Sigmoid colon (tissue), 7 donors: ENCODE measurements at regions of chr19 and their contacts with region 1.

Region 1: GRCh38 chr19:52853880-52854279 is 3.5 kb downstream of the ZNF468 start:
- DNase-seq: no peak
- H3K4me3 ChIP-seq: no peak overlapping the region
- H3K27ac ChIP-seq: no peak overlapping the region
- H3K4me1 ChIP-seq: peaks cover 0 to 14% (median 3%) of the 10 kb centered on the region in 4 donors
- H3K27me3 ChIP-seq: no peaks in the 10 kb centered on the region
- CTCF ChIP-seq: no peak
- EP300 ChIP-seq: no peak
- POLR2A ChIP-seq: no peak

Region 2: GRCh38 chr19:52613299-52613906 is 240.5 kb before region 1 on chr19:
- intact Hi-C with region 1: no loop called
- DNase-seq: no peak
- H3K4me3 ChIP-seq: no peak overlapping the region
- H3K27ac ChIP-seq: no peak overlapping the region
- H3K4me1 ChIP-seq: no peaks in the 10 kb centered on the region
- H3K27me3 ChIP-seq: no peaks in the 10 kb centered on the region
- CTCF ChIP-seq: no peak
- EP300 ChIP-seq: no peak
- POLR2A ChIP-seq: no peak

Region 3: DNA sequence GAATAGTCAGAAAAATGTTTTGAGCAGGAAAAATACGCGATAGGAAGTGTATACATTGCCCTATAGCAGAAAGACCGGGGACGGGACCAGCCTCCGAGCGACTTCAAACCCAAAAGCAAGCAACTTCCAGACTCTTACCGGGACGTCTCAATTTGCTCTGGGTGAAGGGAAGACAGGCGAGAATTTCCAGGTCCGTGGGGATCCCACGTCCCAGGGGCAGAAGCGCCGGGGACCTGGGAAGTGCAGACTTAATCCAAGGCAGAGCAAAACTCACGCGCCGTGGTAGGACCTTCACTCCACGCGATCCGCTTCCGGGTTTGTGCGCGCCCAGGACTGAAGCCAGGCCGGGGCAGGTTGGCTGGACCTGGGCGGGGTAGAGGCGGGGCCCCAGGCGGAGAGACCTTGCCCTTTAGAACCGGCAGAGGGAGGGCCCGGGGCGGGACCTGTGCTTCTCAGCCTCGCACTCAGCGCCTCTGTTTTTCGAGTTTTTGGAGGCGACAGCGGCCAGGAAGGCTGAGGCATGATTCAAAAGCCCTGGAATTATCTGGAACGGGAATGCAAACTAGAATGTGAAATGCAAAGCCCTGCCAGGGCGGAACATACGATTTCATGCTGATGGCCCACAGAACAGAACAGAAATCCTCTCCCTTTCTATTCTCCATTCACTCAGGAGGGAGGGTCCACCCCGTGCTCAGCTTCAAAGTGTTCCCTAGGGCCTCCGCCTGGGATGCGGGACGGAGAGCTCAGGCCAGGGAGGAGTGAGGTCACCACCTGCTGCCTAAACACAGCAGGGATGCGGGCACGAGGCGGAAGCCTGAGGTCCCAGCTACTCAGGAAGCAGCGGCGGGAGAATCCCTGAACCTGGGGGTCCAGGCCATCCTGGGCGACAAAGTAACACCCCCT is 67.2 kb before region 1 on chr19 and contains the start of gene ZNF600:
- intact Hi-C with region 1: loop called (anchors 5 kb)
- DNase-seq: peak; percentile 96
- H3K4me3 ChIP-seq: peak within 1 kb of the TSS; percentile 42 to 68 (median 66)
- H3K27ac ChIP-seq: peak within 1 kb of the TSS; percentile 73 to 86 (median 82)
- H3K4me1 ChIP-seq: peaks cover 0 to 18% (median 13%) of the 10 kb centered on the region in 4 donors
- H3K27me3 ChIP-seq: no peaks in the 10 kb centered on the region
- CTCF ChIP-seq: peak in 3 of 4 experiments; percentile 29 to 39 (median 36)
- EP300 ChIP-seq: no peak
- POLR2A ChIP-seq: peak; percentile 23 to 32
- total RNA-seq, gene ZNF600: 6.8 to 9.4 (median 8.2) TPM

Region 4: GRCh38 chr19:52823676-52824075 is 30.2 kb before region 1 on chr19:
- intact Hi-C with region 1: loop called (anchors 2 kb)
- DNase-seq: no peak
- H3K4me3 ChIP-seq: no peak overlapping the region
- H3K27ac ChIP-seq: no peak overlapping the region
- H3K4me1 ChIP-seq: peaks cover 0 to 7% (median 6%) of the 10 kb centered on the region in 4 donors
- H3K27me3 ChIP-seq: no peaks in the 10 kb centered on the region
- CTCF ChIP-seq: no peak
- EP300 ChIP-seq: no peak
- POLR2A ChIP-seq: no peak

Region 5: DNA sequence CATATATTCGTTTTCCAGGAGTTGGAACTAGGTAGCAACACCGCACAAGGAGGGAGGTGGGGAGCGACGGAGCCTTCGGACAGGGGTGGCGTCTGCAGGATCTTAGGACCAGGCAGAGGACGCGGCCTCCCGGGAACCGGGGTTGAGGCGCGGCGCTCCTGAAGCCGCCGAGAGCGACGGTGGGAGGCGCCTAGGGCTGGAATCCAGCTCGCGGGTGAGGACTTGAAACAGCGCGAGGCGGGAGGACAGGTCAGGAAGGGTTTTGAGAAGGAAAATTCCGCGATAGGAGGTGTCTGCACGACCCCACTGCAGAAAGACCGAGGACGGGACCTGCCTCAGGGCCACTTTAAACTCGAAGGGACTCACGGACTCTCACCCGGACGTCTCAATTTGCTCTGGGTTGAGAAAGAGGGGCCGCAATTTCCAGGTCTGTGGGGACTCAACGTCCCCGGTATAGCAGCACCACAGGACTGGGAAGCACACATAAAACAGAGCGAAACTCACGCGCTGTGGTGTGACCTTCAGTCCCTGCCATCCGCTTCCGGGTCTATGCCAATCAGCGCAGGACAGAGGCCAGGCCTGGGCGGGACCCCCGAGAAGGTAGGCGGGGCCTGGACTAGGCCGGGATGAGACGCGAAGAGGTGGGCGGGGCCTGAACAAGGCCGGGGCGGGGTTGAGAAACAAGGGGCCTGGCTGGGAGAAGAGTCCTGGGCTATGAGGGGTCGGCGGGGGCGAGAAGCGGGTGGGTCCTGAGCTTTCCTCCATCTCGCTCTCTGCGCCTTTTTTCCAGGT is 43.5 kb after region 1 on chr19 and contains the start of gene ZNF320:
- intact Hi-C with region 1: no loop called
- DNase-seq: peak; percentile 98
- H3K4me3 ChIP-seq: peak within 1 kb of the TSS; percentile 61 to 81 (median 72)
- H3K27ac ChIP-seq: peak within 1 kb of the TSS; percentile 87 to 96 (median 92)
- H3K4me1 ChIP-seq: peaks cover 0 to 19% (median 17%) of the 10 kb centered on the region in 4 donors
- H3K27me3 ChIP-seq: no peaks in the 10 kb centered on the region
- CTCF ChIP-seq: no peak
- EP300 ChIP-seq: no peak
- POLR2A ChIP-seq: peak; percentile 33 to 73
- total RNA-seq, gene ZNF320: 9.0 to 21.8 (median 15.0) TPM